A549 (cell line): ENCODE measurements at regions of chr1 and their contacts with region 1.

Region 1: DNA sequence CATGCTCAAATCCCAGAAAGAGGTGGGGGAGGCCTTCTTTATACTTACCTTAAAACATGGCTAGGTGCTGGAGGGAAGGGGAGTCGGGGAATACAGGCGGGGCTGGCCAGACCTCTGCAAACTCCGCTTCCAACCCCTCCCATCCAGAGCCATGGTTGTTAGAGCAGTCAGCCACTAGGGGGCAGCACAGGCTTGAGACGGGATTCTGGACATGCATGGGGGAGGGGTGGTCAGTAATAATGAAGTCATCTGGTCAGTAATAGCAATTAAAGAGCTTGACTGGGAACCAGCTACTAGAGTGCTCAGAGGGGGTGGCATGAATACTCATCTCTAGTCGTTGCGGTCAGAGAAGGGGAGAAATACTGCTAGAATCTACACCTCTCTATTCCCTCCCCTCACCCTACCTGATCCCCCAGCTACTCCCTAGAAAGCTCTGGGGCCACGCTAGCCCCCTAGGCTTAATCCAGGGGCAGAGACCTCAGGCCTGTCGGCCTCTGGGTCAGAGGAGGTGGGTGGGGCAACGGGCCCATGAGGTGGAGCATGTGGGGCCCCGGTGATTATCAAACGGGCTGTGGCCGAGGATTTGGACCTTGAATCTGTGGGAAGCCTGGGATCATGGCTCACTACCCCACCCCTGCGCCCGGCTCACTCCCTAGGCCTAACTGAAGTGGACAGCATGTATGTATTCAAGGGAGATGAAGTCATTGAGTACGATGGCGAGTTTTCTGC is 2.9 kb downstream of the CASQ1 start:
- DNase-seq: peak; percentile 68 to 78
- ATAC-seq: peak; percentile 75 to 89
- H3K4me3 ChIP-seq: no peak overlapping the region
- H3K27ac ChIP-seq: peak overlapping the region; percentile 43 to 61; a peak in 5 of 6 replicates
- H3K4me1 ChIP-seq: peaks cover 18% of the 10 kb centered on the region
- CTCF ChIP-seq: peak; percentile 92
- EP300 ChIP-seq: no peak
- POLR2A ChIP-seq: no peak
- RAD21 ChIP-seq: peak; percentile 92 to 95

Region 2: GRCh38 chr1:159996653-159997052 is 196.6 kb before region 1 on chr1:
- CTCF ChIA-PET with region 1: no interaction called
- POLR2A ChIA-PET with region 1: no interaction called
- DNase-seq: peak; percentile 16 to 57
- ATAC-seq: peak; percentile 85 to 95
- H3K4me3 ChIP-seq: no peak overlapping the region
- H3K27ac ChIP-seq: 0 out of 6 replicates have a peak overlapping the region, but pooled peaks of 1 of the 2 experiments have one; percentile 25
- H3K4me1 ChIP-seq: peaks cover 10% of the 10 kb centered on the region; the same call in 2 of the 3 replicates
- CTCF ChIP-seq: no peak
- EP300 ChIP-seq: no peak
- POLR2A ChIP-seq: no peak
- RAD21 ChIP-seq: no peak

Region 3: DNA sequence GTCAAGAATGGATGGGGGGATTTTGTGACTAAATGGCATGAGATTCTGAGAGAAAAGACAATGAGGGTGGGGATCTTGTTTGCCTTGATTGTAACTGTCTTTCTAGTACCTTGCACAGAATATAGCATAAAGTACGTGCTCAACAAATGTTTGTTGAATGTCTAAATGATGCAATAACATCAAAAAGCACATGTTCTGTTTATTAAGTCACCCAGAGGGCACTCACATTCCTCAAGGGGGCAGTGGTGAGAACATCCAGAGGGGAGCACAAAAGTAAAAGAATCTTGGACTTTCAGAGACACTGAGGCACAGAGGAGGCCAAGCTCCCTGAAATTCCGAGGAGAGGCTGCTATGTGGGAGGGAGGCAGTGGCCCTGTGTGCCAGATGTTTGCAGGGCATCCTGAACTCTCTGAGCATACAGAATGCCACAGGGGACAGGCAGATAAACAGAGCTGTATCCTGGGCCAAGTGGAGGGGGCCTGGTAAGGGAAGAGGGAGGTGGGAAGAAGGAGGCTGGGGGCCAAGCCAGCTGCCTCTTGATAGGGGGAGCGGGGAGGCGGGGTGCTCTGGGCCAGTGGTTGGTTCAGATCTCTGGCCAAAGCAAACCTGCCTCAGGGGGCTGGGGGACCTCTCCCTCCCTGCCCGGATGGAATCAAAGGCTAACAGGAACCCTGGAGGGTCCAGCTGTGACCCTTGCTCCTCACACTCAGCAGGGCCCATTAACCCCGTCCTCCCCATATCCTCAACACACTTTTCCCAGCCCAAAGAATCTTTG is 84.2 kb before region 1 on chr1:
- CTCF ChIA-PET with region 1: interaction called, 86 read pairs
- POLR2A ChIA-PET with region 1: no interaction called
- DNase-seq: peak; percentile 75 to 80
- ATAC-seq: peak; percentile 40 to 68; a peak in 4 of 6 replicates
- H3K4me3 ChIP-seq: no peak overlapping the region
- H3K27ac ChIP-seq: peak overlapping the region; percentile 77 to 83
- H3K4me1 ChIP-seq: peaks cover 20% of the 10 kb centered on the region
- CTCF ChIP-seq: peak; percentile 57
- EP300 ChIP-seq: peak in 1 of 2 experiments; percentile 34; a peak in 1 of 5 replicates
- POLR2A ChIP-seq: no peak
- RAD21 ChIP-seq: peak; percentile 27 to 35; a peak in 3 of 5 replicates

Region 4: DNA sequence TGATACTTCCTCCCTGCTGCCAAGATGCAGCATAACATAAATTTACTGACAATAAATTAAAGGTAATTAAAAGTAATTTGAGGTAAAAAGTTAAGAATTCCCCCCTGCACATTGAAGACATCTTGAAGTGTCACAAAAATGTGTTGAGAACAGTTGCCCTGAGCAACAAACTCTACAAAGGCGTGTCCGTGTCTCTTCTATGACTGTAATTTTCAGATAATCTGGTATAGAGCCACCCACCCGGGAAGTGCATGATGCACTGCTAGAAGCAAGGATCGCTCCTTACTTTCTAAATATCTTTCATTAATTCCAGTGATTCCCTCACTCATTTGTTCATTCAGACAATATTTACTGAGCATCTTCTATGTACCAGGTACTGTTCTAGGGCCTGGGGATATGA is 13.9 kb before region 1 on chr1:
- CTCF ChIA-PET with region 1: interaction called, 40 read pairs
- POLR2A ChIA-PET with region 1: no interaction called
- DNase-seq: peak in 1 of 2 experiments; percentile 16
- ATAC-seq: no peak
- H3K4me3 ChIP-seq: no peak overlapping the region
- H3K27ac ChIP-seq: no peak overlapping the region
- H3K4me1 ChIP-seq: no peaks in the 10 kb centered on the region
- CTCF ChIP-seq: no peak
- EP300 ChIP-seq: no peak
- POLR2A ChIP-seq: no peak
- RAD21 ChIP-seq: no peak

Region 5: GRCh38 chr1:160219062-160219929 is 26.0 kb after region 1 on chr1:
- CTCF ChIA-PET with region 1: interaction called, 108 read pairs
- POLR2A ChIA-PET with region 1: interaction called, 3 read pairs
- DNase-seq: peak; percentile 55 to 70
- ATAC-seq: peak; percentile 87 to 88
- H3K4me3 ChIP-seq: no peak overlapping the region
- H3K27ac ChIP-seq: 0 out of 6 replicates have a peak overlapping the region, but pooled peaks of 1 of the 2 experiments have one; percentile 5
- H3K4me1 ChIP-seq: peaks cover 19% of the 10 kb centered on the region; the same call in 2 of the 3 replicates
- CTCF ChIP-seq: peak; percentile 61
- EP300 ChIP-seq: no peak
- POLR2A ChIP-seq: no peak
- RAD21 ChIP-seq: peak; percentile 72 to 74

Region 6: GRCh38 chr1:160238408-160238807 is 45.2 kb after region 1 on chr1:
- CTCF ChIA-PET with region 1: interaction called, 15 read pairs
- POLR2A ChIA-PET with region 1: no interaction called
- DNase-seq: no peak
- ATAC-seq: no peak
- H3K4me3 ChIP-seq: no peak overlapping the region
- H3K27ac ChIP-seq: no peak overlapping the region
- H3K4me1 ChIP-seq: no peaks in the 10 kb centered on the region
- CTCF ChIP-seq: no peak
- EP300 ChIP-seq: no peak
- POLR2A ChIP-seq: no peak
- RAD21 ChIP-seq: no peak

Region 7: DNA sequence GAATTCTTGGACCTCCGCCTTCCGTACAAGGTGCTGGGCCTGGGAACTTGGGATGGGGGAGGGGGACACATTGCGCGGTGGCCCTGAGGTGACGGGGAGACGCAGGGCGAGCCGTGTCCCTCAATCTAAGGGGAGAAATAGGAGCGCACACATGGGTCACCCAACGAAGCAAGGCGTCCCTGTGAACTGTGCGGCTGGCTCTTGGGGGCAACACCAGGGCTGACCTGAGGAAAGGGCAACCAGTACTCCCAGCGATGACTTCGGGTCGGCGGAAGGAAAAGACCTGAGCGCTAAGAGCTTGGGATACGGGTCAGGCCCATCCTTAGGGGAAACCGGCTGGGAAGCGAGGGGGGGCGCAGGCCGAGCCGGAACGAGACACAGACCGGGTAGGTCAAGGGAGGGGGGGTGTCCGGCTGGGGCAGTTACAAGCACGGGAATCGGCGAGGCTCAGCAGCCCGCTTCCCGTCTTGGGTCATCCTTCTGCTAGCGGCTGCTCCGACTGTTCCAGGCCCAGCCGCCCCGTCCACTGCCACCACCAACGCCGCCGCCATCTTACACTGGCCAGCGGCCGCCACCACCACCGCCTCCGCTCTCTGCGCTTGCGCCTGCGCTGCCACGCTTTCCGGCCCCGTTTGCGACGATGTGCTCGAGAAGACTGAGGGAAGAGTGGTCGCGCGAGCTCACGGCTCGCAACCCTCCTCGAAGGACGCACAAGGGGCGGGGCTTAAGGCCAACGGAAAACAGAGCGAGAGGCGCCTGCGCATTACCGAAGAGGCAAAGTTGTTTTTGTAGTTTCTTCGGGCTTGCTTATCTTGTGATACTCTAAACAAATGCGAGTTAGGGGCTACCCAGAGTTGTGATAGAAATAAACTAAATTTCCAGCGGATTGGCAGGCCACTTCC is 68.9 kb after region 1 on chr1 and contains the start of gene DCAF8:
- CTCF ChIA-PET with region 1: interaction called, 29 read pairs
- POLR2A ChIA-PET with region 1: no interaction called
- DNase-seq: peak; percentile 89 to 98
- ATAC-seq: peak; percentile 95 to 96
- H3K4me3 ChIP-seq: peak within 1 kb of the TSS; percentile 83
- H3K27ac ChIP-seq: peak within 1 kb of the TSS; percentile 96 to 99
- H3K4me1 ChIP-seq: peaks cover 36% of the 10 kb centered on the region
- CTCF ChIP-seq: no peak
- EP300 ChIP-seq: no peak
- POLR2A ChIP-seq: peak; percentile 97
- RAD21 ChIP-seq: no peak
- polyA plus RNA-seq, gene DCAF8: 103 and 113 TPM in 2 replicates